ENCODE measurements at regions of chr15 and their contacts with region 1.

Region 1: DNA sequence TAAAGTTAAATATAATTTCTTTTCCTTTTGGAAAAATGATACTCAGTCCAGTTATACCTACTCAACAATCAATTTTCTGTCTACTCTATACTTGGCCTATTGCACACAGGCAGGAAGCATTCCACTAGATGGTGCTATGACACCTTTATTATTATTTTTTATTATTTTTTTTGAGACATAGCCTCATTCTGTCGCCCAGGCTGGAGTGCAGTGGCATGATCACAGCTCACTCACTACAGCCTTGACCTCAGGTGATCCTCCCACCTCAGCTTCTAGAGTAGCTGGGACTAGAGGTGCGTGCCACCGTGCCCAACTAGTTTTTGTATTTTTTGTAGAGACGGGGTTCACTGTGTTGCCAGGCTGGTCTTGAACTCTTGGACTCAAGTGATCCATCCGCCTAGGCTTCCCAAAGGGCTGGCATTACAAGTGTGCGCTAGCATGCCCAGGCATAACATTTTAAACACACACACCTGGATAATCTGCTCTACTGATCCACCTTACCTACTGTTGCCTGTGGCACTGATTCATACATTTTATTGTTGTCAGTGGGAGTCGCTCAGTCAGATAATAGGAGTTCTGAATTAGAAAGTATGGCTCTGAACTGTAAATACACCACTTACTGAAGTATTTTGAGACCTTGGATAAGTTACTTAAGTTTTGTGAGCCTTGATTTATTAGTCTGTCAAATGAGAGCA is 56.2 kb downstream of the EIF3J start:
- DNase-seq: no peak
- H3K4me3 Mint-ChIP-seq: no peak overlapping the region
- H3K27ac Mint-ChIP-seq: peak overlapping the region; percentile 55
- H3K4me1 Mint-ChIP-seq: peaks cover 34% of the 10 kb centered on the region
- H3K27me3 Mint-ChIP-seq: no peaks in the 10 kb centered on the region

Region 2: DNA sequence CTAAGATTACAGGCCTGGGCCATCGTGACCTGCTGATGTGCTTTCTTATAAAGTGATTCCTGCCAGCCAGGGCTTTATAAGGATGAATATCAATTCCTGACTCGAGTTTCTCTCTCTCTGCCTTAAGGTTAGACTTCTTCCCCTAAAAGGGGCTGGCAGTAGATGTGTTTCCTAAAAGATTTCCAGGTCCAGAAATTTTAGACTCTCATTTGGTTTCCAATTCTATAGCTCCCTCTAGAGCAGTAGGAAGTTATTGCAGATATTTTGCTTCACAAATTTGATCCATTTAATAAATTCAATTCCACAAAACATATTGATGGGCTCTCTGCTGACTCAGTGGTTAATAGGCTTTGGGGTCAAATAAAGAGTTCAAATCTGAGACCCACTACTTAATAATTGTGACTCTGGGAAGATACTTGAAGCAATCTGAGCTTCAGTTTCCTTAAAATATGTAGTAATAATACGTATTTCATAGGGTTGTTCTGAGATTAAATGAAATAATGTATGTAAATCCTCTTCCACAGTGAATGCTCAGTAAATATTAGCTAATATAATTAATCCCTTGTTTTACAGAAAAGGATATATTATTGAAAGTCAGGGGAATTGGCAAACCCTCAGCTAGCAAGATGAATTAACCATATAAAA is 145.3 kb after region 1 on chr15:
- intact Hi-C with region 1: loop called (anchors 1 kb)
- DNase-seq: no peak
- H3K4me3 Mint-ChIP-seq: peak overlapping the region; percentile 56
- H3K27ac Mint-ChIP-seq: peak overlapping the region; percentile 40
- H3K4me1 Mint-ChIP-seq: peaks cover 44% of the 10 kb centered on the region
- H3K27me3 Mint-ChIP-seq: no peaks in the 10 kb centered on the region

Region 3: DNA sequence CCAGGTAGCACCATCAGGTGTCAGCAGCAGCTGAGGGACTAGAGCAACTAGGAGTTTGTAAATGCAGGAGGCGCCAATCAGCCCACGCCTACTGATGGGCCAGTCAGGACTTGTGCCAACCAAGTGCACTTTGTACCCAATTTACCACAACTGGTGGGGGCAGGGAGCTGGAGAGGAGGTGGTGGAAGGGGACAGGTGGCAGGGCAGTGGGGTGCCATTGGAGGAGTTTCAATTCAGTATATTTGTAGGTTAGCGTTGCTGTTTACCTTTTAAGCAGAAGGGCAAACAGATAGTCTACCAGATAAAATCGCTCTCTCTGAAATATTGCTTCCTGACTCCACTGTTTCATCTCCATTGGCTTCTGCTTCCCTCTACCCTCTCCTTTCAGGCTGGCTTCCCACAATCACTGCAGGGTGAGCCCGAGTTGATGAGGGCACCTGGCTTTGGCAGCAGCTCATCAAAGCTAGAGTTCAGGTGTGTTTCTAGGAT is 218.9 kb after region 1 on chr15:
- intact Hi-C with region 1: no loop called
- DNase-seq: no peak
- H3K4me3 Mint-ChIP-seq: no peak overlapping the region
- H3K27ac Mint-ChIP-seq: no peak overlapping the region
- H3K4me1 Mint-ChIP-seq: no peaks in the 10 kb centered on the region
- H3K27me3 Mint-ChIP-seq: peaks cover 31% of the 10 kb centered on the region

Region 4: DNA sequence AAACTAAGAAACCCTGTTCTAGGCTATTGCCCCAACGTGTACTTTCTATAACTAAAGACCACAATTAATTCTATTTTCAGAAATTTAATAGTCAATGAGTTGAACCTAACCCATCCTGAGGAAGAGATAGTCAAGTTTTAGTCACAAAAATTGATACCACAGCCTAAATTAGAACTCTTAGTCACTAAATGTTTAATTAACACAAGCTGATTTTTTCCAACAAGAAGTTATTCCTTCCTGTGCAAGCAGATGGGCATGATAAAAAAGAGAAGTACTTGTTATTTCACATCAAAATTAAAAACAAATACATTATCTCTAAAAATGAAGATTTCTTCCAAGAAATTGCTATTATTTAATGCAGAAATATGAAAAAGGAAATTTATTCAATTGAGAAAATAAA is 324.9 kb after region 1 on chr15:
- intact Hi-C with region 1: loop called (anchors 10 kb)
- DNase-seq: no peak
- H3K4me3 Mint-ChIP-seq: no peak overlapping the region
- H3K27ac Mint-ChIP-seq: no peak overlapping the region
- H3K4me1 Mint-ChIP-seq: no peaks in the 10 kb centered on the region
- H3K27me3 Mint-ChIP-seq: peaks cover 1% of the 10 kb centered on the region

Region 5: DNA sequence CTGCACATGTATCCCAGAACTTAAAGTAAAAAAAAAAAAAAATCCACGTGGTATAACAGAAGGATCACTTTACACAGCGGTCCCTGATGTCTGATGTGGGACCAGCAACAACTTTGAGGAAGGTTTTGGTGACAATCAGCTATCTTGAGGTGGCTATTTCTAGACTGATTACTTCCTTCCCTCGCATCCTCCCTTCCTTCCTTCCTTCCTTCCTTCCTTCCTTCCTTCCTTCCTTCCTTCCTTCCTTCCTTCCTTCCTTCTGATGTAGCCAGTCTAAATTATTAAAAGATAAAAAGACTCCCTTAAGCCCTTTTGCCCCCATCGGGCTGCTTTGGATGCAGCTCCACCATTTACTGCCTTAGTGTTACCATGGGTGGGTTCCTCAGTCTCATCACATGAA is 444.7 kb after region 1 on chr15:
- intact Hi-C with region 1: loop called (anchors 5 kb)
- DNase-seq: no peak
- H3K4me3 Mint-ChIP-seq: no peak overlapping the region
- H3K27ac Mint-ChIP-seq: no peak overlapping the region
- H3K4me1 Mint-ChIP-seq: peaks cover 11% of the 10 kb centered on the region
- H3K27me3 Mint-ChIP-seq: no peaks in the 10 kb centered on the region